ENCODE measurements at regions of chr2 and their contacts with region 1.

Region 1: DNA sequence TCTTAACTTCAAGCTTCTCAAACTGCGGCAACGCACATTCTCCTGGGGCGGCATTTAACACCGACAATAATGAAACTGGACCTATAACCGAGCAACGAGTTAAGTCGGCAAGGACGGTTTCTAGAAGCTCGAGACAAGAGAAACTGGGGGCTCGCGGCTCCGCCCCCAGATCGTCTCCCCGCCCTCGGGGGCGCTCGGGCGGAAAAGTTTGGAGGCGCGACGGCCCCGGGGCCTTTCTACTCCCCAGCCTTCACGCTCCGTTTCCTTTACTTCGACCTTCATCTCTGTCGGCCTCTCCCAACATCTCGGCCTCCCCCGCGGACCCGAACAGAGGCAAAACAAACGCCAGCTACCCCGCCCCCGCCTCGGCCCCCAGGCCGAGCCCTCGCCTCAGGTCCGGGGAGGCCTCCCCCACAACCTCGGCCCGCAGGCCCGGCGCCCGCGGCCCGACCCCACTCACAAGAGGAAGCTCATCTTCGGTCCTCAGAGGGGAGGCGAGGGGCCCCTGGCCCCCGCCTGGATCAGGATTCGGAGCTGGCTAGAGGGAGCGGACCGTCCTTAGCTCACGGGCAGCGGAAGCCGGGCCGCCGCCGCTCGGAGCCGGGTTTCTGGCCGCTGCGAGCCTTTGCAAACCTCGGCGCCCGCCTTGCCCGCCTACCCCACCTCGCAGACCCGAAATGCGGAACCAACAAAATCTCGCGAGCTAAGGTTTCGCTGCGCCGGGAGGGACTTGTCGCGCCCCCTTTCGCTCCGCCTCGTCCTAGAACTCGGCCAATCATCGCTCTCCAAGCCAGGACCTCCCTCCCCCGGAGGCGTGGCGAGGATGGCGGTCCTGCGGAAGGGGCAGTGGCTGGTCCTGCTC is at the start of gene MOB1A:
- DNase-seq: peak; percentile 95
- H3K4me3 ChIP-seq: peak within 1 kb of the TSS; percentile 77
- H3K27ac ChIP-seq: peak within 1 kb of the TSS; percentile 90
- H3K27me3 ChIP-seq: no peaks in the 10 kb centered on the region
- CTCF ChIP-seq: no peak
- polyA plus RNA-seq, gene MOB1A: 49.7 and 59.7 TPM in 2 replicates

Region 2: DNA sequence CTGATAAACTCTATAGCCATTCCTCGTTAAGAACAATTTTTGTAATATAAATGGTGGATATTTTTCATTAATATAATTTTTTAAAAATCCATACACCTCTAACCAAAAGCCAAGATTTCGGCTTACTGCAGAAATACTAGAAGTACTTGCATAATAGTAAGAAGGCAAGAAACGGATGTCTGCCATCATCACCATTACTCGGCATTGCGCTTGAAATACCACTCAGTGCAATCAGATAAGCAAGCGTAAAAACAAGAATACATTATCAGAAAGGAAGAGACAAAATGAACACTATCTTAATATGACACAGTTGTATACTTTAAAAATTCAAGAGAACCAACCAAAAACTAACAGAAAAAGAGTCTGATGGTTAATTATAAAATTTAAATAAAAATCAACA is 15.5 kb before region 1 on chr2:
- CTCF ChIA-PET with region 1: interaction called, 13 read pairs
- POLR2A ChIA-PET with region 1: interaction called, 9 read pairs
- DNase-seq: no peak
- H3K4me3 ChIP-seq: no peak overlapping the region
- H3K27ac ChIP-seq: no peak overlapping the region
- H3K27me3 ChIP-seq: no peaks in the 10 kb centered on the region
- CTCF ChIP-seq: no peak

Region 3: GRCh38 chr2:74198461-74199274 is 20.2 kb after region 1 on chr2 and contains the start of gene MTHFD2:
- CTCF ChIA-PET with region 1: interaction called, 13 read pairs
- POLR2A ChIA-PET with region 1: interaction called, 25 read pairs
- DNase-seq: peak; percentile 94
- H3K4me3 ChIP-seq: peak within 1 kb of the TSS; percentile 97
- H3K27ac ChIP-seq: peak within 1 kb of the TSS; percentile 99
- H3K27me3 ChIP-seq: peaks cover 2% of the 10 kb centered on the region
- CTCF ChIP-seq: peak; percentile 80
- polyA plus RNA-seq, gene MTHFD2: 234 and 299 TPM in 2 replicates

Region 4: GRCh38 chr2:74267068-74267467 is 88.6 kb after region 1 on chr2:
- CTCF ChIA-PET with region 1: no interaction called
- POLR2A ChIA-PET with region 1: no interaction called
- DNase-seq: no peak
- H3K4me3 ChIP-seq: no peak overlapping the region
- H3K27ac ChIP-seq: no peak overlapping the region
- H3K27me3 ChIP-seq: peaks cover 16% of the 10 kb centered on the region
- CTCF ChIP-seq: no peak

Measured in AG04450 (cell line).